Heart right ventricle (tissue), 16 donors: ENCODE measurements at regions of chr17 and their contacts with region 1.

Region 1: GRCh38 chr17:7136266-7136877 is 21.8 kb upstream of the ASGR2 start:
- DNase-seq: peak; percentile 69 to 81
- ATAC-seq: peak in 2 of 8 donors; percentile 31 to 48
- H3K4me3 ChIP-seq: peak overlapping the region in 1 of 10 donors; percentile 20
- H3K27ac ChIP-seq: peak overlapping the region in 1 of 10 donors; percentile 78
- H3K4me1 ChIP-seq: peaks cover 0 to 41% (median 6%) of the 10 kb centered on the region in 9 donors
- H3K27me3 ChIP-seq: peaks cover 0 to 74% (median 65%) of the 10 kb centered on the region in 7 donors
- CTCF ChIP-seq: peak; percentile 85 to 94 (median 91)

Region 2: GRCh38 chr17:6903326-6903900 is 233.0 kb before region 1 on chr17:
- intact Hi-C with region 1: loop called in 1 of 10 experiments (anchors 10 kb)
- DNase-seq: no peak
- ATAC-seq: no peak
- H3K4me3 ChIP-seq: no peak overlapping the region
- H3K27ac ChIP-seq: no peak overlapping the region
- H3K4me1 ChIP-seq: no peaks in the 10 kb centered on the region
- H3K27me3 ChIP-seq: peaks cover 0 to 8% (median 0%) of the 10 kb centered on the region in 7 donors
- CTCF ChIP-seq: no peak

Region 3: GRCh38 chr17:6913608-6914443 is 222.5 kb before region 1 on chr17:
- intact Hi-C with region 1: loop called in 7 of 10 experiments (anchors 5 to 10 kb)
- DNase-seq: peak; percentile 80 to 84
- ATAC-seq: peak; percentile 78 to 95 (median 84)
- H3K4me3 ChIP-seq: peak overlapping the region in 7 of 10 donors; percentile 24 to 53 (median 44)
- H3K27ac ChIP-seq: no peak overlapping the region
- H3K4me1 ChIP-seq: peaks cover 0 to 22% (median 9%) of the 10 kb centered on the region in 9 donors
- H3K27me3 ChIP-seq: peaks cover 0 to 12% (median 5%) of the 10 kb centered on the region in 7 donors
- CTCF ChIP-seq: peak; percentile 77 to 94 (median 87)

Region 4: GRCh38 chr17:7045909-7046724 is 90.3 kb before region 1 on chr17:
- intact Hi-C with region 1: loop called in 5 of 10 experiments (anchors 1 to 5 kb)
- DNase-seq: no peak
- ATAC-seq: peak in 4 of 8 donors; percentile 26 to 47 (median 36)
- H3K4me3 ChIP-seq: peak overlapping the region in 7 of 10 donors; percentile 15 to 37 (median 31)
- H3K27ac ChIP-seq: peak overlapping the region in 1 of 10 donors; percentile 45
- H3K4me1 ChIP-seq: peaks cover 9 to 44% (median 37%) of the 10 kb centered on the region in 9 donors
- H3K27me3 ChIP-seq: peaks cover 5 to 63% (median 33%) of the 10 kb centered on the region in 7 donors
- CTCF ChIP-seq: peak; percentile 52 to 89 (median 84)

Region 5: DNA sequence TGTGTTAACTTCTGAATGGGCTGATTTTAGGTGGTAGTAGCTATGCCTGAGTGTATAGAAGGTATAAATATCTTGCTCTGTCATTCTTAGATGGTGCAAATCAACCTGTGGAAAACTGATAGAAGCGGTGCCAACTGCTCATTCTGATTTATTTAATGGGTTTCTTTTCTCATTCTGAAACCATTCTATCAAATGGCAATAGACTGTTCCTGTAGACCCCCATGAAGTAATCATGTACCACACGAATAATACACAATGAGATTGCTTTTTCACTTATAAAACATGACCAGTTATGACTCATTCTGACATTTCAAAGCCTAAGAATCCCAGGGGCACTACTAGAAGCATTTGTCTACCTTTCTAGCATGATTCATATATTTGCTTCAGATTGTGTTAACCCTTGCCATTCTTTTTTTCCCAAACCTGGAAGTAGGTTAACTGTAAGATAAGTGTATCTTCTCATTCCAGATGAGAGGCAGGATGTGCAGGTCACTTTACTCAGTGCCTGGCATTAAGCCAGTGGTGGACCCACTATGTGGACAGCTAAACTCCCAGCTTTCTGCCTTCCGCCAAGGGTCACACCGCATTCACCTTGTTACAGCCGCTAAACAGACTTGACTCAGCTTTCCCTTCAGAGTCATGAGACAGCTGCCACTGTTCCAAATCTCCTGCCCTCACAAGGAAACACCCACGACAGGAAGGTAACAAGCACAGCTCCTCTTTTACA is 76.0 kb before region 1 on chr17:
- intact Hi-C with region 1: loop called in 2 of 10 experiments (anchors 2 kb)
- DNase-seq: no peak
- ATAC-seq: no peak
- H3K4me3 ChIP-seq: no peak overlapping the region
- H3K27ac ChIP-seq: no peak overlapping the region
- H3K4me1 ChIP-seq: peaks cover 0 to 4% (median 0%) of the 10 kb centered on the region in 9 donors
- H3K27me3 ChIP-seq: peaks cover 0 to 24% (median 12%) of the 10 kb centered on the region in 7 donors
- CTCF ChIP-seq: no peak

Region 6: DNA sequence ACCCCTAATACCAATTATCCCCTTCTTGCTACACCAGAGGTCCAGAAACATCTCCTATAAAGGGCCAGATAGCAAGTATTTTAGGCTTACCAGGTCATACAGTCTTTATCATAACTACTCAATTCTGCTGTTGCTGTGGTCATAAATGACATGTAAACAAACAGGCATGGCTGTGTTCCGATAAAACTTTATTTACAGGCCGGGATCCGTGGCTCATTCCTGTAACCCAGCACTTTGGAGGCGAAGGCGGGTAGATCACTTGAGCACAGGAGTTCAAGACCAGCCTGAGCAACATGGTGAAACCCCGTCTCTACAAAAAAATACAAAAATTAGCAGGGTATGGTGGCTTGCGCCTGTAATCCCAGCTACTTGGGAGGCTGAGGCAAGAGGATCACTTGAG is 30.5 kb after region 1 on chr17:
- intact Hi-C with region 1: no loop called
- DNase-seq: no peak
- ATAC-seq: no peak
- H3K4me3 ChIP-seq: no peak overlapping the region
- H3K27ac ChIP-seq: no peak overlapping the region
- H3K4me1 ChIP-seq: peaks cover 0 to 20% (median 0%) of the 10 kb centered on the region in 9 donors
- H3K27me3 ChIP-seq: peaks cover 0 to 9% (median 0%) of the 10 kb centered on the region in 7 donors
- CTCF ChIP-seq: no peak

Region 7: DNA sequence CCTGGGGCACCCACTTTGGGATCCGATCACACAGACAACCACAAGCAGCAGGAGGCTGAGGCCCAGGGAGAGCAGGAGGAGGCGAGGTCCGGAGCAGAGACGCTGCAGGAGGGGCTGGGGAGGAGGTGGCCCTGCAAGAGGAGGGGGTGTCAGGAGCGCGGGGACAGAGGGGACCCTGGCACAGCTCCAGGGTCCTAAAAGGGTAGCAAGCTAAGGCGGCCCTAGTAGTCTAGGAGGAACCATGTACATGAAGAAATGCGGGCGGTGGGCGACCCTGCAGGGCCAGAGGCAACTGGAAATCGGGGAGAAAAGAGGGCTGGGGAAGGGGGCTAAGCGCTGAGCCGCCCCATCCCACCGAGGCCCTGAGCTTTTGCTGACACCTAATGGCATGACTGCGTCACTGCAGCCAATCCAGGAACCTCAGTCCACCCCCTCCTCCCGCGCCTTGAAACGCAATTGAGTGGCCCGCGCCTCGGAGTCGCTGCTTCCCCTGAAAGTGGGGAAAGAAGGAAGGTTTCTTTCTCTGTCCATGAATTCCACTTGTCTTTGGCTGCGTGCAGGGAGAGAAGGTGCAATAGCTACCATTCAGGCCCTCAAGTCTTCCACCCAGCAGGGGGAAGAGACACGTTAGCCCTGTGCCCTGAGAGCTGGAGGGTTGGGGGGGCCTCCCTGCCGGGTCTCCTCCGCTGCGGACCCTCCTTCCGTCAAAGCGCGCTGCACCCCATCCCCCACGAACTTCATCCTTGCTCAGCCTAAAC is 41.0 kb after region 1 on chr17:
- intact Hi-C with region 1: loop called in 1 of 10 experiments (anchors 5 kb)
- DNase-seq: peak; percentile 50 to 65
- ATAC-seq: peak; percentile 66 to 90 (median 82)
- H3K4me3 ChIP-seq: peak overlapping the region in 9 of 10 donors; percentile 14 to 59 (median 44)
- H3K27ac ChIP-seq: peak overlapping the region in 1 of 10 donors; percentile 37
- H3K4me1 ChIP-seq: peaks cover 0 to 27% (median 16%) of the 10 kb centered on the region in 9 donors
- H3K27me3 ChIP-seq: peaks cover 0 to 37% (median 24%) of the 10 kb centered on the region in 7 donors
- CTCF ChIP-seq: peak; percentile 77 to 93 (median 89)

Region 8: GRCh38 chr17:7192271-7193100 is 56.1 kb after region 1 on chr17:
- intact Hi-C with region 1: no loop called
- DNase-seq: no peak
- ATAC-seq: no peak
- H3K4me3 ChIP-seq: no peak overlapping the region
- H3K27ac ChIP-seq: no peak overlapping the region
- H3K4me1 ChIP-seq: no peaks in the 10 kb centered on the region
- H3K27me3 ChIP-seq: no peaks in the 10 kb centered on the region
- CTCF ChIP-seq: no peak